ENCODE measurements at regions of chrX and their contacts with region 1.

Region 1: GRCh38 chrX:48475774-48476577 is at the start of gene FTSJ1:
- DNase-seq: peak; percentile 59 to 95 (median 91)
- ATAC-seq: peak; percentile 93
- H3K4me3 ChIP-seq: peak within 1 kb of the TSS; percentile 83
- H3K4me3 Mint-ChIP-seq: peak within 1 kb of the TSS; percentile 74 to 93 (median 88)
- H3K27ac ChIP-seq: peak within 1 kb of the TSS; percentile 93
- H3K27ac Mint-ChIP-seq: peak within 1 kb of the TSS; percentile 84 to 96 (median 93)
- H3K4me1 ChIP-seq: peaks cover 8 to 10% of the 10 kb centered on the region in 2 donors
- H3K4me1 Mint-ChIP-seq: peaks cover 19 to 35% (median 26%) of the 10 kb centered on the region in 7 donors
- H3K27me3 ChIP-seq: no peaks in the 10 kb centered on the region
- H3K27me3 Mint-ChIP-seq: no peaks in the 10 kb centered on the region
- total RNA-seq, gene FTSJ1: 48.6 to 62.5 (median 59.5) TPM

Region 2: DNA sequence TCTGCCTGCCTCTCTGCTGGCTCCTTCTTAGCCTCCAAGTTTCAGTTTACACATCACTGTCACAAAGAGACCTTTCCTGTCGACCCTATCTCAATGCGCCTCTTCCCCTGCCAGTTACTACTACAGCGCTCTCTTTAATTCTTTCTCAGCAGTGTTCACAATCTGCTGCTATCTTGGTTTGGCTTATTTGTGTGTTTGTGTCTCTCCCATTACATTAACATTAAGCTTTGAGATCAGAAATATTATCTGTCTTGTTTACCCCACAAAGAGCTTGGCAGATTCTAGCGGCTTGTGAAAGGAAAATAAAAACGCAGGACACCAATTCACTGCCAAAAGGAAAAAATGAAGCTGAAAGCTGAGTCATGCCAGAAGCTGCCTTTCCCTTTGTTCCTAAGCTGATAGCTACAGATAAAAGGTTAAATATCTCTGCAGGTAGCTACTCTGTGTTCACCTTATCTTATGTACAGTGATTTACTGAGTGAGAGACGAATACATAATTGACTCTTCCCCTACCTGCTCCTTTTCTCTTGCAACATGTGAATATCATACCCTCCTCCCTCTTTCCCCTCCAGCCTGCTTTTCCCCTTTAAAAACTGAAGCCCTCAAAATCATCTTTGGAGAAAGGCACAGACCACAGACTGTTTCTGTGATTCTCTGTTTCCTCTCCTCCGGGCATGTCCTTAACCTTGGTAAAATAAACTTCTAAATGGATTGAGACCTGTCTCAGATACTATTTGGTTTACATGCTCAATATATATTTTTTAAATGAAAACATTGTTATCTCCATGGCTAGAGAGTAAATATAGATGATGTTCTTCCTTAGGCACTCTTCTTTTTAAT is 1697.8 kb before region 1 on chrX:
- CTCF ChIA-PET with region 1: no interaction called
- POLR2A ChIA-PET with region 1: no interaction called
- intact Hi-C with region 1: no loop called
- DNase-seq: no peak
- ATAC-seq: no peak
- H3K4me3 ChIP-seq: no peak overlapping the region
- H3K4me3 Mint-ChIP-seq: no peak overlapping the region
- H3K27ac ChIP-seq: no peak overlapping the region
- H3K27ac Mint-ChIP-seq: no peak overlapping the region
- H3K4me1 ChIP-seq: no peaks in the 10 kb centered on the region
- H3K4me1 Mint-ChIP-seq: peaks cover 0 to 5% (median 0%) of the 10 kb centered on the region in 7 donors
- H3K27me3 ChIP-seq: no peaks in the 10 kb centered on the region
- H3K27me3 Mint-ChIP-seq: peaks cover 0 to 4% (median 0%) of the 10 kb centered on the region in 5 donors

Region 3: DNA sequence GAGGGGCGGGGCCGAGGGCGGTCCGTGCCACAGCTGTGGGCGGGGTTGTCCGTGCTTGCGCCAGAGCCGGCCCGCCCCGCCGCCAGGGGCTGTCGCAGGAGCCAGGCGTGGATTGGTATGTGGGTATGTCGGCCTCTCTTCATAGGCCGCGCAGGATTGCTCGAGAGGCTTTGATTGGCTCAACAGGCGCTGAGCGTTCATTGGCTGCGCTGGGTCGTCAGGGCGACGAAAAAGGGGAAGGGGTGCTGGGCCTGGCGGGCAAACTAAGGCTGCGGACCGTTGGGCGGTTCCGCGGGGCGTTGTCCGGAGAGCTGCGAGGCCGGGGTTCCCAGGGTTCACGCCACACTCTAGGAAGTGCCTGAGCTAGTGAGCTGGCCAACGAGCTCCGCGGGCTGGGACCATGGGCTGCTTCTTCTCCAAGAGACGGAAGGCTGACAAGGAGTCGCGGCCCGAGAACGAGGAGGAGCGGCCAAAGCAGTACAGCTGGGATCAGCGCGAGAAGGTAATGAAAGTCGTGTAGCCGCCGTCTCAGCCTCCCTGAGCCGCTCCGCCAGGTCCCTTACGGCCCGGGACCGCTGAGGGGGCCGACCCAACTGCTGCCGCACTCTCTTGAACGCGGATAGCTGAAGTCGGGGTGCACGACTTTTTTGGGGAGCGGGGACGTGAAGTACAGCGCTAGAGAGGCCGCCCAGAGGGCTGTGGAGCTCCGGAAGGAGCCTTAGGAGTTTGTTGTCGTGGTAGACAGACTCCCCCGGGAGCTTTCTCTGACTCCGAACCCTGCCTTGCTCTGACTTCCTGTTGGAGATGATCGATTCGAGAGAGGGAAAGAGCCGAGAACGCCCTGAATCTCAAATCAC is 1639.0 kb before region 1 on chrX and contains the start of gene RP2:
- CTCF ChIA-PET with region 1: no interaction called
- POLR2A ChIA-PET with region 1: no interaction called
- intact Hi-C with region 1: loop called in 1 of 2 experiments (anchors 10 kb)
- DNase-seq: peak; percentile 65 to 84 (median 81)
- ATAC-seq: peak; percentile 98
- H3K4me3 ChIP-seq: peak within 1 kb of the TSS; percentile 91
- H3K4me3 Mint-ChIP-seq: peak within 1 kb of the TSS; percentile 93 to 99 (median 97)
- H3K27ac ChIP-seq: peak within 1 kb of the TSS; percentile 83
- H3K27ac Mint-ChIP-seq: peak within 1 kb of the TSS; percentile 80 to 98 (median 93)
- H3K4me1 ChIP-seq: no peaks in the 10 kb centered on the region
- H3K4me1 Mint-ChIP-seq: peaks cover 0 to 29% (median 12%) of the 10 kb centered on the region in 7 donors
- H3K27me3 ChIP-seq: no peaks in the 10 kb centered on the region
- H3K27me3 Mint-ChIP-seq: peaks cover 0 to 3% (median 0%) of the 10 kb centered on the region in 5 donors
- total RNA-seq, gene RP2: 4.9 to 14.5 (median 6.3) TPM

Region 4: DNA sequence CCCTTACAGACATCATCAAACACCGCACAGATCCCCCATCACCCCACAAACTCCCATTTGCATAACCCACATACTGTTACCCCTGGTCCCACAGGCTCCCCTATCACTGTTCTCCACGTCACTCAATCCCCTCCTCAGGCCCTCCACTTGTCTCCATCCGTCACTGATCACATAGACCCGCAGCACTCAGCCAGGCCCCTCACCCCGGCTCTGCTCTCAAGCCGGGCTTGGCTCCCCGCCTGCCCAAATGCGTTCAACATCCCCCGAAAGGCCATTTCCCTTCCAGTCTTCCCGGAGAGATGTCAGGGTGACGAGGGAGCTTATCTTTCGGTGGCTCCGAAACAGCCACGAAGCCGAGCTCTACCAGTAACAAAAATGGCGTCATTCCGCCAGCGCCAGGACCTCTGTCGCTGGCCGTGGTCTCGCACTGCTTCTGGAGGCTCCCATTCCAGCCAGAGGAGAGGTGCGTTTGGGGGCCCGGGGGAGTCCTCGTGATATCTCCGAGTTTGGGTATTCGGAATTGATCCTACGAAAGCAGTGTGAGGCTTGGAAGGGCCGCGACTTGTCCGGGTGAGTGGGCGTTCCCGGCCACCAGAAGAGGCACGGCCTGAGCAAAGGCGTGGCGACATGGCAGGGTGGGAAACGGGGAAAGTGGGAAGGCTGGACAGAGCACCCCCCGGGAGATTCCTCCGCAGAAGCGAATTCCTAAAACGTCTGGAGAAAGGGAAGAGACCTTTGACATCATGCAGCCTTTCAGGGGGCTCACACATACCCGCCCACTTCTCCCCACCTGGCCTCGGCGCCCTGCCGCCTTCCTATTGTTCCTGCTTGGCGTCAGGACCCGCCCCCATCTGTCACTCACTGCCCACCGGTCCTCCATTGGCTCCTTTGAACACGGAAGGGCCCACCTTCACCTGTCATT is 404.7 kb before region 1 on chrX and contains the start of gene ZNF630:
- CTCF ChIA-PET with region 1: no interaction called
- POLR2A ChIA-PET with region 1: no interaction called
- intact Hi-C with region 1: loop called in 1 of 2 experiments (anchors 1 kb)
- DNase-seq: peak; percentile 13 to 49 (median 35)
- ATAC-seq: peak; percentile 86
- H3K4me3 ChIP-seq: peak within 1 kb of the TSS; percentile 79
- H3K4me3 Mint-ChIP-seq: peak within 1 kb of the TSS; percentile 89 to 95 (median 92)
- H3K27ac ChIP-seq: peak within 1 kb of the TSS; percentile 80
- H3K27ac Mint-ChIP-seq: peak within 1 kb of the TSS; percentile 87 to 97 (median 94)
- H3K4me1 ChIP-seq: peaks cover 0 to 4% of the 10 kb centered on the region in 2 donors
- H3K4me1 Mint-ChIP-seq: peaks cover 0 to 26% (median 15%) of the 10 kb centered on the region in 7 donors
- H3K27me3 ChIP-seq: no peaks in the 10 kb centered on the region
- H3K27me3 Mint-ChIP-seq: no peaks in the 10 kb centered on the region
- total RNA-seq, gene ZNF630: 0.53 to 5.1 (median 2.2) TPM

Region 5: DNA sequence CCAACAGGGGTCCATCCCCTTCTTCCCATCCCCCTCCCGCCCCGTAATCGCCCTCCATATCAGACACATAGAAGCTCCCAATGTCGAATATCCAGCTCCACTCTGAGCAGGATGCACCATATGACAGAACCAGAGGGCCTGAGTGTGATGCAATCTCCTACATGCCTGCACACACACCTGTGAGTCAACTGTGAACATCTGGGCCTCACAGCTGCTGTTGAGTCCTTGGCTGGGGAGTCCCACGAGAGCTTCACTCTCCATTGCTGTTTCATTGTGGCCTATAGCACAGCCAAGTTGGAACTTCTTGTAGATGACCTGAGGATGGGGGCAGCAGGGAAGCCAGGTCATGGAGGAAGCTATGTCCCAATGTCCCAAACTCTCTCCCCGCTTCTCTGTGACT is 14.1 kb before region 1 on chrX:
- CTCF ChIA-PET with region 1: no interaction called
- POLR2A ChIA-PET with region 1: no interaction called
- intact Hi-C with region 1: no loop called
- DNase-seq: no peak
- ATAC-seq: no peak
- H3K4me3 ChIP-seq: no peak overlapping the region
- H3K4me3 Mint-ChIP-seq: no peak overlapping the region
- H3K27ac ChIP-seq: no peak overlapping the region
- H3K27ac Mint-ChIP-seq: peak overlapping the region in 1 of 9 donors; percentile 70
- H3K4me1 ChIP-seq: no peaks in the 10 kb centered on the region
- H3K4me1 Mint-ChIP-seq: peaks cover 5 to 35% (median 9%) of the 10 kb centered on the region in 7 donors
- H3K27me3 ChIP-seq: no peaks in the 10 kb centered on the region
- H3K27me3 Mint-ChIP-seq: no peaks in the 10 kb centered on the region

Region 6: GRCh38 chrX:48508400-48509244 is 32.6 kb after region 1 on chrX and contains the start of gene PORCN:
- CTCF ChIA-PET with region 1: no interaction called
- POLR2A ChIA-PET with region 1: no interaction called
- intact Hi-C with region 1: loop called in 1 of 2 experiments (anchors 1 kb)
- DNase-seq: peak; percentile 50 to 81 (median 66)
- ATAC-seq: peak; percentile 96
- H3K4me3 ChIP-seq: peak within 1 kb of the TSS; percentile 71
- H3K4me3 Mint-ChIP-seq: peak within 1 kb of the TSS; percentile 82 to 95 (median 91)
- H3K27ac ChIP-seq: peak within 1 kb of the TSS; percentile 85
- H3K27ac Mint-ChIP-seq: peak within 1 kb of the TSS; percentile 78 to 93 (median 88)
- H3K4me1 ChIP-seq: peaks cover 4 to 8% of the 10 kb centered on the region in 2 donors
- H3K4me1 Mint-ChIP-seq: peaks cover 10 to 28% (median 16%) of the 10 kb centered on the region in 7 donors
- H3K27me3 ChIP-seq: no peaks in the 10 kb centered on the region
- H3K27me3 Mint-ChIP-seq: no peaks in the 10 kb centered on the region
- total RNA-seq, gene PORCN: 13.1 to 19.0 (median 16.8) TPM

Region 7: DNA sequence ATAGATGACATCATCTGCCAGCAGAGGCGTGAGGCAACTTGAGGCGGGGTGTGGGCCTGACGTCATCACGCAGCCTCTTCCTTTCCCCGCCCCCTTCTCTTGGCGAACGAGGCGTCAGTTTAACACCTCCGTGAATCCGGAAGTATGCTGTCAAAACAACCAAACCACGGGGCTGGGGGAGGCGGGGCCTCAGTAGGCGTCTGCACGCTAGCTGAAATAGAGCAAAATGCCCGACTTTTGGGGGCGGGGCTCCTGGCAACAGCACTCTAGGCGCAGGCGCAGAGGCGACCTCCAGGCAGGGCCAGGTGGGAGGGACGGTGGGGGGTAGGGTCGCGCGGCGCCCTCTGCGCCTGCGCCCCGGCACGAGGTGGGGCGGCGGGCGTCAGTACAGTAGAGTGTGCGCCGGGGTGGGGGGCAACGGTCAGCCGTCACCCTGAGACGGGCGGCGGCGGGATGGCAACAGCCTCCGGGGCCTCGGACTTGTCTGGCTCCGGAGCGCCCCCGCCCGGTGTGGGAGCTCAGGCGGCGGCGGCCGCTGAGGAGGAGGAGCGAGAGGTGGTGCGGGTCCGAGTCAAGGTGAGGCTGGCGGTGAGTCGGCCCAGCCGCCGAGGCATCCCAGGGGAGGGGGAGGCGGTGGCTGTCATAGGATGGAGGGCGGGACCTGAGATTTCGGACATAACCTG is 63.5 kb after region 1 on chrX and contains the start of gene TBC1D25:
- CTCF ChIA-PET with region 1: interaction called, 3 read pairs
- POLR2A ChIA-PET with region 1: interaction called, 12 read pairs
- intact Hi-C with region 1: loop called (anchors 1 kb)
- DNase-seq: peak; percentile 85 to 99 (median 95)
- ATAC-seq: peak; percentile 92
- H3K4me3 ChIP-seq: peak within 1 kb of the TSS; percentile 75
- H3K4me3 Mint-ChIP-seq: peak within 1 kb of the TSS; percentile 80 to 98 (median 90)
- H3K27ac ChIP-seq: peak within 1 kb of the TSS; percentile 91
- H3K27ac Mint-ChIP-seq: peak within 1 kb of the TSS; percentile 90 to 99 (median 96)
- H3K4me1 ChIP-seq: peaks cover 8 to 10% of the 10 kb centered on the region in 2 donors
- H3K4me1 Mint-ChIP-seq: peaks cover 14 to 18% (median 16%) of the 10 kb centered on the region in 7 donors
- H3K27me3 ChIP-seq: no peaks in the 10 kb centered on the region
- H3K27me3 Mint-ChIP-seq: no peaks in the 10 kb centered on the region
- total RNA-seq, gene TBC1D25: 20.2 to 31.2 (median 26.4) TPM

Region 8: GRCh38 chrX:48597353-48598264 is 121.6 kb after region 1 on chrX and contains the start of gene WDR13:
- CTCF ChIA-PET with region 1: no interaction called
- POLR2A ChIA-PET with region 1: no interaction called
- intact Hi-C with region 1: loop called (anchors 1 kb)
- DNase-seq: peak; percentile 77 to 93 (median 91)
- ATAC-seq: peak; percentile 93
- H3K4me3 ChIP-seq: peak within 1 kb of the TSS; percentile 98
- H3K4me3 Mint-ChIP-seq: peak within 1 kb of the TSS; percentile 81 to 99 (median 96)
- H3K27ac ChIP-seq: peak within 1 kb of the TSS; percentile 94
- H3K27ac Mint-ChIP-seq: peak within 1 kb of the TSS; percentile 98 to 100 (median 99)
- H3K4me1 ChIP-seq: peaks cover 0 to 8% of the 10 kb centered on the region in 2 donors
- H3K4me1 Mint-ChIP-seq: peaks cover 4 to 16% (median 11%) of the 10 kb centered on the region in 7 donors
- H3K27me3 ChIP-seq: no peaks in the 10 kb centered on the region
- H3K27me3 Mint-ChIP-seq: peaks cover 0 to 2% (median 0%) of the 10 kb centered on the region in 5 donors
- total RNA-seq, gene WDR13: 44.8 to 66.9 (median 54.4) TPM

Region 9: GRCh38 chrX:48696301-48697181 is 220.6 kb after region 1 on chrX and contains the start of gene SUV39H1:
- CTCF ChIA-PET with region 1: no interaction called
- POLR2A ChIA-PET with region 1: no interaction called
- intact Hi-C with region 1: loop called in 1 of 2 experiments (anchors 10 kb)
- DNase-seq: peak; percentile 76 to 90 (median 85)
- ATAC-seq: peak; percentile 97
- H3K4me3 ChIP-seq: peak within 1 kb of the TSS; percentile 62
- H3K4me3 Mint-ChIP-seq: peak within 1 kb of the TSS; percentile 86 to 95 (median 90)
- H3K27ac ChIP-seq: peak within 1 kb of the TSS; percentile 82
- H3K27ac Mint-ChIP-seq: peak within 1 kb of the TSS; percentile 91 to 96 (median 95)
- H3K4me1 ChIP-seq: peaks cover 0 to 13% of the 10 kb centered on the region in 2 donors
- H3K4me1 Mint-ChIP-seq: peaks cover 6 to 39% (median 28%) of the 10 kb centered on the region in 7 donors
- H3K27me3 ChIP-seq: no peaks in the 10 kb centered on the region
- H3K27me3 Mint-ChIP-seq: no peaks in the 10 kb centered on the region
- total RNA-seq, gene SUV39H1: 4.6 to 23.3 (median 8.6) TPM

Region 10: GRCh38 chrX:49120099-49120498 is 644.1 kb after region 1 on chrX:
- CTCF ChIA-PET with region 1: no interaction called
- POLR2A ChIA-PET with region 1: no interaction called
- intact Hi-C with region 1: no loop called
- DNase-seq: no peak
- ATAC-seq: no peak
- H3K4me3 ChIP-seq: no peak overlapping the region
- H3K4me3 Mint-ChIP-seq: peak overlapping the region in 3 of 10 donors; percentile 9 to 24 (median 12)
- H3K27ac ChIP-seq: no peak overlapping the region
- H3K27ac Mint-ChIP-seq: peak overlapping the region in 2 of 9 donors; percentile 12 to 30
- H3K4me1 ChIP-seq: peaks cover 16 to 18% of the 10 kb centered on the region in 2 donors
- H3K4me1 Mint-ChIP-seq: peaks cover 32 to 59% (median 37%) of the 10 kb centered on the region in 7 donors
- H3K27me3 ChIP-seq: no peaks in the 10 kb centered on the region
- H3K27me3 Mint-ChIP-seq: no peaks in the 10 kb centered on the region

Measured in naive thymus-derived CD4-positive, alpha-beta T cell (primary cell).